Aorta (tissue), 5 donors: ENCODE measurements at regions of chr17 and their contacts with region 1.

Region 1: GRCh38 chr17:35612924-35613521 is 25.9 kb downstream of the AP2B1 start:
- DNase-seq: peak in 1 of 2 donors; percentile 53
- ATAC-seq: no peak
- H3K4me3 ChIP-seq: no peak overlapping the region
- H3K27ac ChIP-seq: no peak overlapping the region
- H3K4me1 ChIP-seq: no peaks in the 10 kb centered on the region
- H3K27me3 ChIP-seq: no peaks in the 10 kb centered on the region

Region 2: GRCh38 chr17:35499548-35499947 is 113.5 kb before region 1 on chr17:
- intact Hi-C with region 1: no loop called
- DNase-seq: no peak
- ATAC-seq: no peak
- H3K4me3 ChIP-seq: no peak overlapping the region
- H3K27ac ChIP-seq: no peak overlapping the region
- H3K4me1 ChIP-seq: peaks cover 0 to 2% of the 10 kb centered on the region in 2 donors
- H3K27me3 ChIP-seq: no peaks in the 10 kb centered on the region

Region 3: DNA sequence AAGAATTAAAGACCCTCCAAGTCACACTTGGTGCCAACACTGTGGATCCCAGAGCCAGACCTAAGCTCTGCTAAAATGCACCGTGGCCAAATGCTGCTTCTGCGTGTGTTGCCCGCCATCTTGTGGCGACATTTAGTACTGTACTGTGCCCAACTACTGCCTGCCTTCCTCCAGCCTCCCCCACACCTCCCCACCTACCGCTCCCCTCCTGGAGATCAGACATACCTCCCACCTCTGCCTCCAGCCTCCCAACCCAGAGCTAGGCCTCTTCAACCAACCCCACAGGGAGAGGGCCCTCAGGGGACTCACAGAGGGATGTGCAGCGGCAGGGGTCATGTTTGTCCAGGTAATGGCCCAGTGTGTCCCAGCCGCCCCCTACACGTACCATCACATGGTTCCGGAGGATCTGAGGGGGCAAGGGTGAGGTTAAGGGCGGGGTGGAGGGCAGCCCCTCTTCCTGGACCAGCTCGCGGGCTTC is 134.6 kb after region 1 on chr17:
- intact Hi-C with region 1: loop called (anchors 2 to 5 kb)
- DNase-seq: peak; percentile 82 to 90
- ATAC-seq: peak; percentile 84
- H3K4me3 ChIP-seq: no peak overlapping the region
- H3K27ac ChIP-seq: no peak overlapping the region
- H3K4me1 ChIP-seq: no peaks in the 10 kb centered on the region
- H3K27me3 ChIP-seq: no peaks in the 10 kb centered on the region